ENCODE measurements at regions of chr13 and their contacts with region 1.

Region 1: DNA sequence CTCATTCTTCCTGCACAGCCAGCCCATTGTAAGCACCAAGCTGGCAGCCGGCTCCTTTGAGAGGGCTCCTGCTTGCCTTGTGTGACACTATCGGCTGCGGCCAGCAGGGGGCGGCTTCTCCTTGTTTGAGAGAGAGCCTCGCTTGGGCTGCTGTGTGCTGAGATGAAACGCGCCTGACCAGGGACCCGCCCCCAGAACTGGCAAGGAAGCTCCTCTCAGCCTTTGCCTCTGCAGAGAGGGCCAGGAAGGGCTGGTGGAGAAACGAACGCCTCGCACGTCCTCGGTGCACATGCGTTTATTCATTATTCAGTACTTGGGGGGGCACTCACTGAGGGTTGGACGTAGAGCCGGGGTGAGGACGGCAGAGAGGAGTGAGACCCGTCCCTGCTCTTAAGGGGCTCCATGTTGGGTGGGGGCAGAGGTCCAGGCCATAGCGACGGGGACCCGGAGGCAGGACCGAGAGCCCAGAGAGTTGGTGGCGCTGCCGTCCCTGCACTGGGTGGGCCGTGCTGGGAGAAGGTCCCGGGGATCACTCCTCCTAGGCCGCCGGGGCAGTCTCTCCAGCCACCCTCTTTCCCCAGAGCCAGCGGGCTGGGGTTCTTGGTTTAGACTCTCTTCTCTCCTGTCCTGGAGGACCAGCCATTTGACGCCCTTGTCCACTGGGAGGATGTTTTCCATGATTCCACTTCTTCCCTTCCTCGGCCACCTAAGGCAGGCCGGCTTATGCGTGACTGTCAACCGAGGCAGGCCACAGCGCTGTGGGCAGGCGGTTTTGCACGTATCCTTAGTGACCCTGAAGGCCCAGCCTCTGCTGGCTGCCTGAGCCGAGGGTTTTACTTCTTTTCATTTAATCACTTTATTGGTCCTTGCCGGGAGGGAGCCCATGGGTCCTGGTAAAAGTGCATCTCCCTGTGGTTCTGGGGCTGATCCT is 174.5 kb downstream of the KATNAL1 start:
- DNase-seq: peak; percentile 99
- ATAC-seq: peak; percentile 100
- H3K4me3 Mint-ChIP-seq: no peak overlapping the region
- H3K27ac Mint-ChIP-seq: peak overlapping the region; percentile 16
- H3K4me1 Mint-ChIP-seq: peaks cover 12% of the 10 kb centered on the region
- H3K27me3 Mint-ChIP-seq: no peaks in the 10 kb centered on the region
- CTCF ChIP-seq: peak; percentile 80

Region 2: DNA sequence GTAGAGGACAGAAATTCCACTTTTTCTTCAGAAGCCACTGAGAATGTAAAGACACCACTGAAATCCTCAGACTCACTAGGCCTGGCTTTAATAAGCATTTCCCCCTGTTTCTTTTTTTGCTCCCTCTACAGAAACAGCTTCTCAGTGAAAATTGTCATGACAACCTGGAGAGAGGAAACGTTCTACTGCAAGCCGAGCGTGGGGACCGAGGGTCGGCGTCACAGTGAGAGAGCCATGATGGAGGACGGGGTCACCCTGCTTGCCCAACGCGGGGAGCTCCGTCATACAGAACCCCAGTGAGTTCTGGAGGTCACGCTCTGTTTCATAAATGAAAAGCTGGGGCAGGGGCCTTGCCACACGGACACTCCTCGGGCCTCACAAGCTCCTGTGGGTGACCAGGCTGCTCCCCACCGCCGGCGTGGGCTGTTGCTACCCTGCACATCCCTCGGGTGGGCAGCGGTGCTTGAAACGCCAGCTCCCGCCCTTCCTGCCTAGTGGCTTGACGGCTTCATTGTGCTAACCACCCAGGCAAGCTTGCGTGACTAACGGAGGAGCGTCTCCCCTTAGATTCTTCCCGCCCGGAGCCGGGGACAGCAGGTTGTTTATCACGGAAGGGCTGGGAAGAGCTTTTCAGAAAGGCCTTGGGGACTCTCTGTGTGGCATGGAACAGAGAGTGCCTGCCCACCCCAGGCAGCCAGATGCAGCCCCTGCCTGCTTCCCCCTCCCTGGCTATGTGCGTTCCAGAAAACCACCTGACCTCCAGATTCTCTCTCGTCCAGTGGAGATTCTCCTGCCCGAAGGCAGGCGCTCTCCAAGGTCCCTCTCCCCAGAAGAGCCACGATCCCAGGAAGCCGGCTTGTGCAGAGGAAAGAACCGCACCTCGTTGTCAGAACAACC is 20.9 kb after region 1 on chr13:
- CTCF ChIA-PET with region 1: interaction called, 109 read pairs
- POLR2A ChIA-PET with region 1: interaction called, 4 read pairs
- intact Hi-C with region 1: no loop called
- DNase-seq: no peak
- ATAC-seq: no peak
- H3K4me3 Mint-ChIP-seq: no peak overlapping the region
- H3K27ac Mint-ChIP-seq: no peak overlapping the region
- H3K4me1 Mint-ChIP-seq: peaks cover 52% of the 10 kb centered on the region
- H3K27me3 Mint-ChIP-seq: no peaks in the 10 kb centered on the region
- CTCF ChIP-seq: no peak

Region 3: GRCh38 chr13:30179597-30180276 is 46.8 kb after region 1 on chr13:
- CTCF ChIA-PET with region 1: interaction called, 27 read pairs
- POLR2A ChIA-PET with region 1: no interaction called
- intact Hi-C with region 1: no loop called
- DNase-seq: no peak
- ATAC-seq: no peak
- H3K4me3 Mint-ChIP-seq: no peak overlapping the region
- H3K27ac Mint-ChIP-seq: no peak overlapping the region
- H3K4me1 Mint-ChIP-seq: no peaks in the 10 kb centered on the region
- H3K27me3 Mint-ChIP-seq: no peaks in the 10 kb centered on the region
- CTCF ChIP-seq: no peak

Region 4: GRCh38 chr13:30257468-30258099 is 124.7 kb after region 1 on chr13:
- CTCF ChIA-PET with region 1: interaction called, 16 read pairs
- POLR2A ChIA-PET with region 1: interaction called, 3 read pairs
- intact Hi-C with region 1: no loop called
- DNase-seq: no peak
- ATAC-seq: no peak
- H3K4me3 Mint-ChIP-seq: no peak overlapping the region
- H3K27ac Mint-ChIP-seq: no peak overlapping the region
- H3K4me1 Mint-ChIP-seq: peaks cover 18% of the 10 kb centered on the region
- H3K27me3 Mint-ChIP-seq: no peaks in the 10 kb centered on the region
- CTCF ChIP-seq: no peak

Region 5: GRCh38 chr13:30341815-30342570 is 209.1 kb after region 1 on chr13:
- CTCF ChIA-PET with region 1: interaction called, 15 read pairs
- POLR2A ChIA-PET with region 1: interaction called, 3 read pairs
- intact Hi-C with region 1: no loop called
- DNase-seq: no peak
- ATAC-seq: no peak
- H3K4me3 Mint-ChIP-seq: no peak overlapping the region
- H3K27ac Mint-ChIP-seq: no peak overlapping the region
- H3K4me1 Mint-ChIP-seq: peaks cover 24% of the 10 kb centered on the region
- H3K27me3 Mint-ChIP-seq: no peaks in the 10 kb centered on the region
- CTCF ChIP-seq: no peak

Region 6: GRCh38 chr13:30572859-30573275 is 440.0 kb after region 1 on chr13:
- CTCF ChIA-PET with region 1: interaction called, 8 read pairs
- POLR2A ChIA-PET with region 1: no interaction called
- intact Hi-C with region 1: loop called (anchors 10 kb)
- DNase-seq: peak; percentile 17
- ATAC-seq: peak; percentile 69
- H3K4me3 Mint-ChIP-seq: peak overlapping the region; percentile 51
- H3K27ac Mint-ChIP-seq: peak overlapping the region; percentile 73
- H3K4me1 Mint-ChIP-seq: peaks cover 42% of the 10 kb centered on the region
- H3K27me3 Mint-ChIP-seq: no peaks in the 10 kb centered on the region
- CTCF ChIP-seq: peak; percentile 27